HepG2 (cell line): ENCODE measurements at regions of chr1 and their contacts with region 1.

Region 1: DNA sequence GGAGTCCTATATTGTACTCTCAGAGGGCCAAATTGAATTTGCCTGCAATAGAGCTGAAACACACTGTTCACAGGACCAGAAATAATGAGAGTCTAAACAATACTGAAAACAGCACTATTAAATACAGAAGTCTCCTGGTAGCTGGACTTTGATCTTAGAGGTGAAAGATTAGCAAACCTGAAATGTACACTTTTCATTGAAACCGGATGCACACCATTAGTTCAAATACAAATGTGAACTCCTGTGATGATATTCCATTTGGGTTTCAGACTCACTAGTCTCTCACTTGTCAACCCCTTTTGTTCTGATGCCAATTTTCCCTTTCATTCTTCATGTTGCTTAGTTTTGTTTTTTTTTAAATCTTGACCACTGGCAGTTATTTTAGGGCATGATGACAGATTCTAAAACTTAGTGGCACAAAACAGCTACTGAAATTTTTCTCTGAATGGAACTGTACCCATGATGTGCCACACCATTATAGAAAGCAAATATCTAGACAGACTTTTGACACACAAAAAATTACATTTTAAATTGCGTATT is 5.9 kb upstream of the TNFSF4 start:
- DNase-seq: peak; percentile 91
- ATAC-seq: peak; percentile 15; the same call in 2 of the 3 replicates
- H3K4me3 ChIP-seq: peak overlapping the region in 1 of 3 experiments; percentile 0; a peak in 2 of 6 replicates
- H3K27ac ChIP-seq: peak overlapping the region; percentile 85
- H3K4me1 ChIP-seq: peaks cover 71% of the 10 kb centered on the region
- H3K27me3 ChIP-seq: no peaks in the 10 kb centered on the region
- CTCF ChIP-seq: no peak
- EP300 ChIP-seq: peak in 1 of 2 experiments; percentile 86; a peak in 2 of 4 replicates
- POLR2A ChIP-seq: no peak
- RAD21 ChIP-seq: no peak

Region 2: DNA sequence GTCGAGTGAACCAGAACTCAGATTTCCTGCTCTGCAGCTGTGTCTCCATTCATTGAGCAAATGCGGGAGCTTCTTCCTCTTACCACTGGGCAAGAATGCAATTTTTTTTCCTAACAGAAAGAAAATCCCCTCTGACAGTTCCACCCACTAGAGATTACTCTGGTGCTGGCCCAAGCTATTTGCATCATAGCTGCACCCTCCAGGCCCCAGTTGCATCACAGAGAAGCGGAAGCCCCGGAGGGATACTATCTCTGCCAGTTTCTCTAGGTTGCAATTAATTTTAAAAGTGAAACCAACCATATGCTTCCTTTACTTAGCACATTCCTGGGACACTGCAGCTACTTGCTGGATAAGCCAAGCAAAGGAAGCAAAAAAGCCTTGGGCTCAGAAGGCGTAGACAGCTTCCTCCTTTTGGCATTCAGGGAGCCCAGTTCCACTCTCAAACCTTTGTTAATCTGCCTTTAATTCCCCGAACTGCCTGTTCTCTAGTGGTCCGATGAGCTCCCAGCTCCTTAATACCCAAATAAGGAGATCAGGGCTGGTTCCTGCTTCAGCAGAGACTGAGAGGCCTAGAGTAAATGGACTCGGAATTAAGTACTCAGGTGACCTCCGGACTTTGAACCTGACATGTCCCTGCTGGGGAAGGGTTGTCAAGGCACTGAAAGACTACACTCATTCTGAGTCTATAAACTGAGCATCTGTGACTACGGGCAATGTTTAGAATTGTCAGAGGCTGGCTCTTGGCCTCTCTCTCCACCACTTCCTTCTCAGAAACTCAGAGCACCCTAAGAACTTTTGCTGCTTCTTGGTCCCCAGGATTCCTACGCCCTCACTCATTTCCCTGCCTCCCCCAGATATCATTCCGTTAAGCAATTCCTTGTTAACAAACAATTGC is 89.8 kb before region 1 on chr1:
- CTCF ChIA-PET with region 1: no interaction called
- POLR2A ChIA-PET with region 1: interaction called, 10 read pairs
- in situ Hi-C with region 1: no loop called
- intact Hi-C with region 1: no loop called
- DNase-seq: peak; percentile 93
- ATAC-seq: peak; percentile 86
- H3K4me3 ChIP-seq: peak overlapping the region; percentile 48 to 67 (median 64)
- H3K27ac ChIP-seq: peak overlapping the region; percentile 95
- H3K4me1 ChIP-seq: peaks cover 63% of the 10 kb centered on the region
- H3K27me3 ChIP-seq: no peaks in the 10 kb centered on the region
- CTCF ChIP-seq: no peak
- EP300 ChIP-seq: peak in 1 of 2 experiments; percentile 66; a peak in 2 of 4 replicates
- POLR2A ChIP-seq: peak; percentile 15 to 41; a peak in 2 of 4 replicates
- RAD21 ChIP-seq: no peak

Region 3: GRCh38 chr1:173134029-173134428 is 79.0 kb before region 1 on chr1:
- CTCF ChIA-PET with region 1: no interaction called
- POLR2A ChIA-PET with region 1: interaction called, 5 read pairs
- in situ Hi-C with region 1: no loop called
- intact Hi-C with region 1: loop called (anchors 2 kb)
- DNase-seq: no peak
- ATAC-seq: no peak
- H3K4me3 ChIP-seq: no peak overlapping the region
- H3K27ac ChIP-seq: no peak overlapping the region
- H3K4me1 ChIP-seq: peaks cover 26% of the 10 kb centered on the region
- H3K27me3 ChIP-seq: no peaks in the 10 kb centered on the region
- CTCF ChIP-seq: no peak
- EP300 ChIP-seq: no peak
- POLR2A ChIP-seq: no peak
- RAD21 ChIP-seq: no peak

Region 4: DNA sequence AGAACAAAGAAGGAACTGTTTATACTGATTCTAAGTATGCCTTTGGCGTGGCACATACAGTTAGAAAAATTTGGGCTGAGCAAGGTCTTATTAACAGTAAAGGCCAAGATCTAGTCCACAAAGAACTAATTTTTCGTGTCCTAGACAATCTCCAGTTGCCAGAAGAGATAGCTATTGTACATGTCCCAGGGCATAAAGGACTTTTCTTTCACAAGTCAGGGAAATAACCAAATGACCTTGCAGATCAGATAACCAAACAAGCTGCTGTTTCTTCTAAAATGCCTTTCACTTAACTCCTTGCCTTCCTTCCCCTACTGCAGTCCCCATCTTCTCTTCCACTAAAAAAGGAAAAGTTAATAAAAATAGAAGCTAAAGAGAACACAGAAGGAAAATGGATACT is 426.1 kb after region 1 on chr1:
- CTCF ChIA-PET with region 1: no interaction called
- POLR2A ChIA-PET with region 1: no interaction called
- in situ Hi-C with region 1: no loop called
- intact Hi-C with region 1: no loop called
- DNase-seq: no peak
- ATAC-seq: no peak
- H3K4me3 ChIP-seq: no peak overlapping the region
- H3K27ac ChIP-seq: no peak overlapping the region
- H3K4me1 ChIP-seq: peaks cover 13% of the 10 kb centered on the region
- H3K27me3 ChIP-seq: no peaks in the 10 kb centered on the region
- CTCF ChIP-seq: no peak
- EP300 ChIP-seq: no peak
- POLR2A ChIP-seq: no peak
- RAD21 ChIP-seq: no peak